ENCODE measurements at regions of chr20 and their contacts with region 1.

Region 1: DNA sequence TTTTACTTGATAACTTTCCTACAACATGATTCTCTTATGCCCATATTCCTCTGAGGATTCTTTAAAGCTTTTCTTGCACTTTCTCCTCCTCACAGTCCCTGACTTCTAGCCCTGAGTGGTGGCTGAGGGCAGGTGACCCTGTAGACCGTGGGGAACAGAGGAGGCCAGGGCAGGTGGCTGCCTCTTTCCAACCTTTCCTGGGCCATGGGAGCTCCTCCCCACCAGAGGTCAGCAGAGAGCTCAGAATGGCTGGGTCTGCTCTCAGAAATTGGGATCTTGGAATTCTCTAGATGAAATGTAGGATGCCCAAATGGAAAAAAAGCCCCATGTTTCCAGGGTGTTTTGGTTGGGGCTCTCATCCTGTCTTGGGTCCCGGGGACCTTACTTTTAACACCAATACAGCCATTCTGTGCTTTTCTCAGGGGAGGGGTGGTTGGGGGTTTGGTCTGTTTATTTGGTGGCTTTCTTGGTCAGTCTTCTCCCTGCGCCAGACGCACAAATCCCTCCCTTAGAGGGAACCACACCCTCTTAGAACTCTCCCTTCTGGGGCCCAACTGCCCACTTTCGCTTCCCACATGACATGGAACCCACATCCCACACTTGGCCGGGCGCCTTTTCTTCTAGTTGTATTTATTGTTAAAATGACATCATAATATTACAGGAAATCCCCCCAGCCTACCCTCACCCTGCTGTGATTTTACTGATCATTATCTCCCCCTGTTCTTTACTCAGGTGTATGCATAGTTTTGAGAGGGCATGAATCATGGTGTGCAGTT is 17.9 kb downstream of the GNAS start:
- DNase-seq: peak in 6 of 9 donors; percentile 35 to 63 (median 52)
- ATAC-seq: peak; percentile 84
- H3K4me3 ChIP-seq: no peak overlapping the region
- H3K4me3 Mint-ChIP-seq: no peak overlapping the region
- H3K27ac ChIP-seq: no peak overlapping the region
- H3K27ac Mint-ChIP-seq: peak overlapping the region in 2 of 9 donors; percentile 28 to 62
- H3K4me1 ChIP-seq: no peaks in the 10 kb centered on the region
- H3K4me1 Mint-ChIP-seq: peaks cover 0 to 13% (median 3%) of the 10 kb centered on the region in 7 donors
- H3K27me3 ChIP-seq: peaks cover 0 to 3% of the 10 kb centered on the region in 2 donors
- H3K27me3 Mint-ChIP-seq: peaks cover 0 to 22% (median 0%) of the 10 kb centered on the region in 5 donors

Region 2: GRCh38 chr20:58907399-58908137 is 37.1 kb after region 1 on chr20:
- CTCF ChIA-PET with region 1: no interaction called
- POLR2A ChIA-PET with region 1: no interaction called
- intact Hi-C with region 1: loop called in 1 of 2 experiments (anchors 5 kb)
- DNase-seq: peak; percentile 17 to 67 (median 40)
- ATAC-seq: peak; percentile 80
- H3K4me3 ChIP-seq: peak overlapping the region; percentile 8
- H3K4me3 Mint-ChIP-seq: peak overlapping the region in 9 of 10 donors; percentile 54 to 85 (median 76)
- H3K27ac ChIP-seq: peak overlapping the region; percentile 54
- H3K27ac Mint-ChIP-seq: peak overlapping the region; percentile 79 to 95 (median 87)
- H3K4me1 ChIP-seq: peaks cover 17 to 20% of the 10 kb centered on the region in 2 donors
- H3K4me1 Mint-ChIP-seq: peaks cover 29 to 71% (median 46%) of the 10 kb centered on the region in 7 donors
- H3K27me3 ChIP-seq: no peaks in the 10 kb centered on the region
- H3K27me3 Mint-ChIP-seq: no peaks in the 10 kb centered on the region

Region 3: DNA sequence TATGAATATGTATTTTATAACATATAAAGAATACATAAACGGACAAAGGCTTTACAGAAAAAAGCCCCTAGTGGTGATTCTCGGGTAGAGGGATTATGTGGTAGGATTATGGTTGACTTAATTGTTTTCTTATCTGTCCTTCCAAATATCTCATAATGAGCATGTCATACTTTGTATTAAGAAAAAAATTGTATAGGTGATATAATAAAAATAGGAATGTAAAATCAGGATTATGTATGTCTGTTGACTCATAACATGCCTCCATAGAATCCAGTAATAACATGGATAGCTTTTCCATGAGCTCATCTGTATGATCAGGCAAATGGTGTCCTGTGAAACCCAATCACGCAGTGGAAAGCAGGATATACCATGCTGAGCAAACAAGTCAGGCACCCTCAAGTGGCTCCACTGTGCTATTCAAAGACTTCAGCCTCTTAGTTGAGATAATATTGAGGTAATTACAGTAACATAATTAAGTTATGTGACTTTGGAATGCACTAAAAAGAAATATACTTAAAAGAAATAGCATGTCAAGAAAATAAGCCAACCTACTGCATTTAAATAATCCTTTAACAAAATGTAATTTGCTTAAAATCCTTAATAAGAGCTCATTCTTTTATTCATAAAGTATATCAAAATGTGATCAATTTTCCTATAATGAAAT is 211.8 kb after region 1 on chr20:
- CTCF ChIA-PET with region 1: interaction called, 4 read pairs
- POLR2A ChIA-PET with region 1: no interaction called
- intact Hi-C with region 1: loop called (anchors 1 to 2 kb)
- DNase-seq: peak in 2 of 9 donors; percentile 5 to 26
- ATAC-seq: no peak
- H3K4me3 ChIP-seq: no peak overlapping the region
- H3K4me3 Mint-ChIP-seq: no peak overlapping the region
- H3K27ac ChIP-seq: no peak overlapping the region
- H3K27ac Mint-ChIP-seq: no peak overlapping the region
- H3K4me1 ChIP-seq: no peaks in the 10 kb centered on the region
- H3K4me1 Mint-ChIP-seq: peaks cover 0 to 4% (median 0%) of the 10 kb centered on the region in 7 donors
- H3K27me3 ChIP-seq: no peaks in the 10 kb centered on the region
- H3K27me3 Mint-ChIP-seq: peaks cover 4 to 43% (median 9%) of the 10 kb centered on the region in 5 donors

Region 4: GRCh38 chr20:59403261-59403961 is 533.0 kb after region 1 on chr20:
- CTCF ChIA-PET with region 1: interaction called, 10 read pairs
- POLR2A ChIA-PET with region 1: no interaction called
- intact Hi-C with region 1: loop called (anchors 1 kb)
- DNase-seq: peak; percentile 65 to 91 (median 77)
- ATAC-seq: peak; percentile 93
- H3K4me3 ChIP-seq: peak overlapping the region; percentile 53
- H3K4me3 Mint-ChIP-seq: peak overlapping the region in 1 of 10 donors; percentile 59
- H3K27ac ChIP-seq: peak overlapping the region; percentile 41
- H3K27ac Mint-ChIP-seq: peak overlapping the region in 4 of 9 donors; percentile 49 to 94 (median 85)
- H3K4me1 ChIP-seq: peaks cover 12 to 35% of the 10 kb centered on the region in 2 donors
- H3K4me1 Mint-ChIP-seq: peaks cover 0 to 4% (median 2%) of the 10 kb centered on the region in 7 donors
- H3K27me3 ChIP-seq: peaks cover 0 to 7% of the 10 kb centered on the region in 2 donors
- H3K27me3 Mint-ChIP-seq: peaks cover 0 to 18% (median 3%) of the 10 kb centered on the region in 5 donors

Region 5: DNA sequence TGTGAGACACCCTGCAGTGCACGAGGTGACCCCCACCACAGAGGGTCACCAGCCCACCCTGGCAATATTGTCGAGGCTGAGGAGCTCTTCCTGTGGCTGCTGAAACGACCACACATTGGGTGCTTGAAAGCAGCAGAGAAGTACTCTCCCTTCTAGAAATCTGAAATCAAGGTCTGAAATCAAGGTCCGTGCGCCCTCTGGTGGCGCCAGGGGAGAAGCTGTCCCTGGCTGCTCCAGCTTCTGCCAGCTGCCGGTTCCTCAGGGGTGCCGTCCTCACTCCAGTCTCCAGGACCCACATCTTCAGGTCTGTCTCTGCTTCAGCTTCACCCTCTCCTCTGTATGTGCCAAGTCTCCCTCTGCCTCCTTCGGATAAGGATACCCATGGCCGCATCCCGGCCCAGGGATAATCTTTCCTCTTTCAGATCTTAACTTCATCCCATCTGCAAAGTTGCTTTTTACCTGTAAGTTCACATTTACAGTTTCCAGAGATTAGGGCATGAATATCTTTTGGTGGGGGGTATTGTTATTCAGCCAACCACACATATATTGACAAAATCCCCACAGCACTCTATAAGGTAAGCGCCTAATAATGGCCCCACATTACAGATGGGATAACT is 625.6 kb after region 1 on chr20:
- CTCF ChIA-PET with region 1: interaction called, 8 read pairs
- POLR2A ChIA-PET with region 1: no interaction called
- intact Hi-C with region 1: loop called in 1 of 2 experiments (anchors 2 kb)
- DNase-seq: peak; percentile 41 to 71 (median 61)
- ATAC-seq: peak; percentile 77
- H3K4me3 ChIP-seq: no peak overlapping the region
- H3K4me3 Mint-ChIP-seq: no peak overlapping the region
- H3K27ac ChIP-seq: no peak overlapping the region
- H3K27ac Mint-ChIP-seq: no peak overlapping the region
- H3K4me1 ChIP-seq: no peaks in the 10 kb centered on the region
- H3K4me1 Mint-ChIP-seq: no peaks in the 10 kb centered on the region
- H3K27me3 ChIP-seq: no peaks in the 10 kb centered on the region
- H3K27me3 Mint-ChIP-seq: peaks cover 17 to 32% (median 25%) of the 10 kb centered on the region in 5 donors

Measured in naive thymus-derived CD4-positive, alpha-beta T cell (primary cell).